Caco-2 (cell line): ENCODE measurements at regions of chr15 and their contacts with region 1.

Region 1: GRCh38 chr15:89057504-89058133 is 30.6 kb upstream of the ABHD2 start:
- DNase-seq: peak; percentile 77 to 89
- H3K4me3 ChIP-seq: no peak overlapping the region
- H3K4me3 Mint-ChIP-seq: no peak overlapping the region
- H3K27ac Mint-ChIP-seq: no peak overlapping the region
- H3K4me1 ChIP-seq: no peaks in the 10 kb centered on the region; the same call in 1 of the 2 replicates
- H3K4me1 Mint-ChIP-seq: peaks cover 5% of the 10 kb centered on the region
- H3K27me3 ChIP-seq: no peaks in the 10 kb centered on the region
- H3K27me3 Mint-ChIP-seq: no peaks in the 10 kb centered on the region
- CTCF ChIP-seq: peak; percentile 97

Region 2: GRCh38 chr15:89034288-89034687 is 23.3 kb before region 1 on chr15:
- CTCF ChIA-PET with region 1: no interaction called
- POLR2A ChIA-PET with region 1: no interaction called
- intact Hi-C with region 1: no loop called
- DNase-seq: no peak
- H3K4me3 ChIP-seq: no peak overlapping the region
- H3K4me3 Mint-ChIP-seq: no peak overlapping the region
- H3K27ac Mint-ChIP-seq: no peak overlapping the region
- H3K4me1 ChIP-seq: no peaks in the 10 kb centered on the region
- H3K4me1 Mint-ChIP-seq: no peaks in the 10 kb centered on the region
- H3K27me3 ChIP-seq: no peaks in the 10 kb centered on the region
- H3K27me3 Mint-ChIP-seq: peaks cover 7% of the 10 kb centered on the region
- CTCF ChIP-seq: peak; percentile 22 to 53

Region 3: DNA sequence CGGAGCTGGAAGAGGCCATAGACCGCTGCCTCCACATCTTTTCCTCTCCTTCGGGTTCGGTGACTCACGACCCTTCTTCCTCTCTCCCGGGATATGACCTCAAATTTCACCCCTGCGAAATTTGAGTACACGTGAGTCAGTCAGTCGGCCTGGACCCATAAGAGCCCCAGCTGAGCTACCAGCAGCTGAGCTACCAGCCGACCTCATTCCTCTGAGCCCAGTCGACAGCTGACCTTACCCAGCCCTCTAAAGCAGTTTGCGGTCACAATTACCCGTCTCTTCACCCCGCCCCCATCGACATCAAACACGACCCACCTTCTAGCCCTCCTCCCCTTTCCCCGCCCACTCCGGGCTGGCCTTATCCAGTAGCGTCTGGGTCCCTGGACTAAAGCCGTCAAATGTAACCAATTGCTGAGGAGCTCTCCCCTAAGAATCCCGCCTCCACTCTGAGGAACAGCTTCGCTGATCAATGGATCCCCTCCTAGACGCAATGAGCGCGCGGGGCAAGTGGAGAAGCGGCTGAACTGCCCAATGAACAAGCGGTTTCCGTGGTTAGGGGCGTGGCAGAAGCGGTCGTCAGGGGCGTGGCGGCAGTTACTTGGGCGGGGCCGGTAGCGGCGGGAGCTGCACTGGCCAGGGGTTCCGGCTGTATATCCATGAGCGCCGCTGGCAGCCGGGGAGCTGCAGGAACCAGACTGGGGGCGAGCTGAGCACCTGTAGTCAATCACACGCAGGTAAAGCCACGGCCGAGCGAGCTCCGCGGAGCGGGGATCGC is 30.4 kb after region 1 on chr15 and contains the start of gene ABHD2:
- CTCF ChIA-PET with region 1: interaction called, 7 read pairs
- POLR2A ChIA-PET with region 1: no interaction called
- intact Hi-C with region 1: loop called (anchors 2 kb)
- DNase-seq: peak; percentile 98 to 99
- H3K4me3 ChIP-seq: peak within 1 kb of the TSS; percentile 61
- H3K4me3 Mint-ChIP-seq: no peak within 1 kb of the TSS
- H3K27ac Mint-ChIP-seq: no peak within 1 kb of the TSS
- H3K4me1 ChIP-seq: peaks cover 14% of the 10 kb centered on the region; the same call in 1 of the 2 replicates
- H3K4me1 Mint-ChIP-seq: peaks cover 8% of the 10 kb centered on the region
- H3K27me3 ChIP-seq: no peaks in the 10 kb centered on the region
- H3K27me3 Mint-ChIP-seq: no peaks in the 10 kb centered on the region
- CTCF ChIP-seq: no peak
- total RNA-seq, gene ABHD2: 56.4 and 63.0 TPM in 2 replicates

Region 4: GRCh38 chr15:89123181-89123525 is 65.5 kb after region 1 on chr15:
- CTCF ChIA-PET with region 1: no interaction called
- POLR2A ChIA-PET with region 1: no interaction called
- intact Hi-C with region 1: no loop called
- DNase-seq: no peak
- H3K4me3 ChIP-seq: no peak overlapping the region
- H3K4me3 Mint-ChIP-seq: no peak overlapping the region
- H3K27ac Mint-ChIP-seq: peak overlapping the region; percentile 85
- H3K4me1 ChIP-seq: peaks cover 85% of the 10 kb centered on the region
- H3K4me1 Mint-ChIP-seq: peaks cover 56% of the 10 kb centered on the region
- H3K27me3 ChIP-seq: no peaks in the 10 kb centered on the region
- H3K27me3 Mint-ChIP-seq: no peaks in the 10 kb centered on the region
- CTCF ChIP-seq: no peak